ENCODE measurements at regions of chr11 and their contacts with region 1.

Region 1: DNA sequence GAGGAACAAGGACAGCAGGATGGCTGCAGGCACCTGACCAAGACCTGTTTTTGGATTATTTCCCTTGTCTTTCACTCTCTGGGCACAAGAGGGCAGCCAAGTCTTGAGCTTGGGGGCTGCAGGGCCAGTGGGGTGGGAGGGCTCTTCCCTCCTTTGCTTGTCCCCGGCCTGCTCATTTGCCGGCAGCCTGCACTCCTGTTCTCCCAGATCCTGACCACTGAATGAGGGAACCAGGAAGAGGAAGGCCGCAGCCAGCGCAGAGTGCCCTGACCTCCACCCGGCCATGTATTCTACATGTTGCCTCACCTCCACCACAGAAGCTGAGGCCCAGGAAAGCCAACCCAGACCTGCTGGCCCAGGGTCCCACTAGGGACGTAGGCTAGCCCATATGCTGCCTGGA is 15.5 kb upstream of the NNMT start:
- DNase-seq: peak; percentile 86
- H3K4me3 ChIP-seq: no peak overlapping the region
- H3K4me3 Mint-ChIP-seq: no peak overlapping the region
- H3K27ac Mint-ChIP-seq: no peak overlapping the region
- H3K4me1 ChIP-seq: peaks cover 22% of the 10 kb centered on the region; the same call in 1 of the 2 replicates
- H3K4me1 Mint-ChIP-seq: peaks cover 27% of the 10 kb centered on the region
- H3K27me3 ChIP-seq: no peaks in the 10 kb centered on the region; the same call in 1 of the 2 replicates
- H3K27me3 Mint-ChIP-seq: no peaks in the 10 kb centered on the region
- CTCF ChIP-seq: peak; percentile 94 to 95

Region 2: DNA sequence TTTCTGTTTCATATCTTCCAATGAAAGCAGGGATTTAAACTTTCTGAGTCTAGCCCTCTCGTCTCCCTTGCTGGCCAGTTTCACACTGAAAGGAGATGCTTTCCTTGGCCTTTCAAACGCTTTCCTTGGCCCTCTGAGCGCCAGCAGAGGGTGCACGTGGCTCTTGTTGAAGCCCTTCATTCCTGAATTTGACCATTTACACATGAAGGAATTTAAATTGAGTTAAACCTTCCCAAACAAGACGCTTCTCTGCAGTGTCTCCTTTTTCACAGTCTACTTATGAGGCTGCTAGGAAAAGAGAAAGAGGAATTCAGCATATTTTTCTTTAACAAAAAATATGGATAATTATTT is 37.1 kb after region 1 on chr11:
- CTCF ChIA-PET with region 1: interaction called, 3 read pairs
- POLR2A ChIA-PET with region 1: no interaction called
- intact Hi-C with region 1: loop called (anchors 1 kb)
- DNase-seq: peak; percentile 52 to 57
- H3K4me3 ChIP-seq: no peak overlapping the region
- H3K4me3 Mint-ChIP-seq: no peak overlapping the region
- H3K27ac Mint-ChIP-seq: no peak overlapping the region
- H3K4me1 ChIP-seq: peaks cover 20% of the 10 kb centered on the region
- H3K4me1 Mint-ChIP-seq: peaks cover 14% of the 10 kb centered on the region
- H3K27me3 ChIP-seq: no peaks in the 10 kb centered on the region
- H3K27me3 Mint-ChIP-seq: peaks cover 3% of the 10 kb centered on the region
- CTCF ChIP-seq: peak; percentile 32 to 48

Region 3: GRCh38 chr11:114330373-114330772 is 49.7 kb after region 1 on chr11:
- CTCF ChIA-PET with region 1: no interaction called
- POLR2A ChIA-PET with region 1: no interaction called
- intact Hi-C with region 1: no loop called
- DNase-seq: no peak
- H3K4me3 ChIP-seq: no peak overlapping the region
- H3K4me3 Mint-ChIP-seq: no peak overlapping the region
- H3K27ac Mint-ChIP-seq: no peak overlapping the region
- H3K4me1 ChIP-seq: no peaks in the 10 kb centered on the region
- H3K4me1 Mint-ChIP-seq: no peaks in the 10 kb centered on the region
- H3K27me3 ChIP-seq: no peaks in the 10 kb centered on the region
- H3K27me3 Mint-ChIP-seq: peaks cover 12% of the 10 kb centered on the region
- CTCF ChIP-seq: no peak

Region 4: DNA sequence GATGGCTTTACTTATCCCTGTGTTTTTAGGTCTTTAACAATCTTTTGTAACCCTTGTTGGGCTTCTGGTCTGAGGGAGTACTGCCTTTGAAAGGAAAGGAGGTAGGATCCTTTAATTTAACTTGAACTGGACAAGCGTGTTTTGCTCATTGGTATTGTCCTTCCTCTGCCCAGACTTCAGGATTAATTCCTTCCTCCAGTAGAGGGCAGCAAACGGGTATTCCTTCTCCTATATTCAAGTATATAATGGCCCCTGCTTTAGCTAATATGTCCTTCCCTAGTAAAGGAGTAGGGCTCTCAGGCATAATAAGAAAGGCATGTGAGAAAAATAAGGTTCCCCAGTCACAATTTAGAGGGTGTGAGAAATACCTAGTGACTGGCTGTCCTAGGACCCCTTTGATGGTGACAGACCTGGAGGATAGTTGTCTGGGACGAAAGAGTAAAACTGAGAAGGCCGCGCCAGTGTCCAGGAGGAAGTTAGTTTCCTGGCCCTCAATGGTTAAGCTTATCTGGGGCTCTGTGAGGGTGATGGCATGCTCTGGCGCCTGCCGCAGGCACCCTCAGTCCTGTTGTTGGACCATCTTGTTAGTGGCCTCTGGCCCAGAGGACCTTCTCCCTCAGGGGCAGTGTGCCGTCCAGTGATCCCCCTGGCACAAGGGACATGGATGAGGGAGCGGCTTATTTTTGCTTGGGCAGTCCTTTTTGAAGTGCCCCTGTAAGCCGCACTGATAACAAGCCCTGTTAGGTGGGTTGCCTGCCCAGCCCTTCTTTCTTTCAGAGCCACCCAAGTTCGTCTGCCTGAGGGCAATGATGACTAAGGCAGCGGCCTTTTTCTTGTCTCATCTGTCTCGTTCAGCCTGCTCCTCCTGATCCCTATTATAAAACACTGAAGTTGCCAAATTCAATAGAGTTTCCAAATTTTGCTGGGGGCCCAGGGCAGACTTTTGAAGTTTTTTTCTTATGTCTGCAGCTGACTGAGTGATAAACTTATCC is 67.8 kb after region 1 on chr11:
- CTCF ChIA-PET with region 1: no interaction called
- POLR2A ChIA-PET with region 1: no interaction called
- intact Hi-C with region 1: loop called (anchors 2 kb)
- DNase-seq: peak; percentile 62 to 79
- H3K4me3 ChIP-seq: no peak overlapping the region
- H3K4me3 Mint-ChIP-seq: no peak overlapping the region
- H3K27ac Mint-ChIP-seq: no peak overlapping the region
- H3K4me1 ChIP-seq: no peaks in the 10 kb centered on the region
- H3K4me1 Mint-ChIP-seq: no peaks in the 10 kb centered on the region
- H3K27me3 ChIP-seq: no peaks in the 10 kb centered on the region
- H3K27me3 Mint-ChIP-seq: no peaks in the 10 kb centered on the region
- CTCF ChIP-seq: peak; percentile 64 to 75

Region 5: DNA sequence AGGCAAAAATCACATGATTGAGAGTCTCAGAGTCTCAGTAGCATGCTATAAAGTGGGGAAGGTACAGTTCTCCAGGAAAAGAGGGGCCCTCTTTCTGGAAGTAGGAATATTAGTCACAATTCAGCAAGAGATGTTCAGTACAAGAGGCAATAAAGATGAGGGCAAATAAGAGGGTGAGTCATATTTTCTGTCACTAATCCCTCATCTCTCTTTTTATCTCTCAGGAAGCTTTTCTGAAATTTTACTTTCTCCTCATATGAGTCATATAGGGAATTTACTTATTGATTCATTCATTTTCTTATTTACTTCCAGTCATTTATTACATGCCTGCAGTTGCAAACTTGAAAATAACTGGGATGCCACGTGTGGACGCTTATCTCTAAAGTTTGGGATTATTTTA is 282.4 kb after region 1 on chr11:
- CTCF ChIA-PET with region 1: no interaction called
- POLR2A ChIA-PET with region 1: no interaction called
- intact Hi-C with region 1: loop called (anchors 10 kb)
- DNase-seq: no peak
- H3K4me3 ChIP-seq: no peak overlapping the region
- H3K4me3 Mint-ChIP-seq: peak overlapping the region; percentile 11
- H3K27ac Mint-ChIP-seq: peak overlapping the region; percentile 3
- H3K4me1 ChIP-seq: peaks cover 30% of the 10 kb centered on the region
- H3K4me1 Mint-ChIP-seq: peaks cover 36% of the 10 kb centered on the region
- H3K27me3 ChIP-seq: no peaks in the 10 kb centered on the region; the same call in 1 of the 2 replicates
- H3K27me3 Mint-ChIP-seq: no peaks in the 10 kb centered on the region
- CTCF ChIP-seq: no peak

Region 6: DNA sequence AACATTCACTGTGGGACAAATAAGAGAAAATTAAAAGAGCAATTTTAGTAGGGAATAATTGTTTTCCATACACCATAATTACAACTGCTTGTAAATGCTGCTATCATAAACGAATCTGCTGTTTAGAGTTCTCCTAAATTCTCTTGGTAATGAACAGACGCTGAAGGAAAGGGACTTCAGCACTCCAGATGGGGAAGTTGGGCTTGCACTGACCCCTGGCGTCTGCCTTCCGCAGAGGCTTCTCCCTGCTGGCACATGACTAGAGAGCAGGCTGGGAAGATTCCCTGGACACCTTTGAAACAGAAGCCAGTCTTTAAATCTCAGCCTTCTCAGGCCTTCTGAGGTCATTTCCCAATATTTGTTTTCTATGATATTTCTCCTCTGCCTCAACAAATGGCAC is 481.7 kb after region 1 on chr11:
- CTCF ChIA-PET with region 1: no interaction called
- POLR2A ChIA-PET with region 1: no interaction called
- intact Hi-C with region 1: loop called (anchors 1 kb)
- DNase-seq: peak; percentile 78 to 81
- H3K4me3 ChIP-seq: no peak overlapping the region
- H3K4me3 Mint-ChIP-seq: no peak overlapping the region
- H3K27ac Mint-ChIP-seq: no peak overlapping the region
- H3K4me1 ChIP-seq: no peaks in the 10 kb centered on the region
- H3K4me1 Mint-ChIP-seq: no peaks in the 10 kb centered on the region
- H3K27me3 ChIP-seq: no peaks in the 10 kb centered on the region; the same call in 1 of the 2 replicates
- H3K27me3 Mint-ChIP-seq: peaks cover 23% of the 10 kb centered on the region
- CTCF ChIP-seq: peak; percentile 92 to 98